Activated naive CD4-positive, alpha-beta T cell treated with anti-CD3 and anti-CD28 coated beads, Interleukin-2, amount 10 ng/mL, durations not matched to agents 7 days and 5 days (primary cell): ENCODE measurements at regions of chr16 and their contacts with region 1.

Region 1: DNA sequence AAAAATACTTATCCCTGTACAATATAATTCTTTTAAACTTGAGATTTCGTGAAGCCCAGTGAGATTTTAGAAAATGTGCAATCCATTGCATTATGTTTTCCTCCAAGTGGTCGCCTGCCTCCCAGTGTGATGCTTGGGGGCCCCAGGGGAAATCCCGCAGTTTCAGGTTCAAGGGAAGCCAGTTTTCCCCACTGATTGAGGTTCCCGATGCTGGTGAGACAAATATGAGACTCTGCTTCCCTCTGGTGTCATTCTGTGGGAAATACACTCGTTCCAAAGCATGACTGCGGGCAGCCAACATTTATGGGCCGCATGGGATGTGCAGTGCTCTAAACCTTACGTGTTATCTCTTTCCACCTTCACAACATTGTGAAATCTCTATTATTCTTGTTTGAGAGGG is 200.8 kb downstream of the PRKCB start:
- DNase-seq: peak; percentile 52
- H3K4me3 Mint-ChIP-seq: no peak overlapping the region
- H3K27ac Mint-ChIP-seq: no peak overlapping the region
- H3K4me1 Mint-ChIP-seq: peaks cover 52% of the 10 kb centered on the region
- H3K27me3 Mint-ChIP-seq: no peaks in the 10 kb centered on the region

Region 2: DNA sequence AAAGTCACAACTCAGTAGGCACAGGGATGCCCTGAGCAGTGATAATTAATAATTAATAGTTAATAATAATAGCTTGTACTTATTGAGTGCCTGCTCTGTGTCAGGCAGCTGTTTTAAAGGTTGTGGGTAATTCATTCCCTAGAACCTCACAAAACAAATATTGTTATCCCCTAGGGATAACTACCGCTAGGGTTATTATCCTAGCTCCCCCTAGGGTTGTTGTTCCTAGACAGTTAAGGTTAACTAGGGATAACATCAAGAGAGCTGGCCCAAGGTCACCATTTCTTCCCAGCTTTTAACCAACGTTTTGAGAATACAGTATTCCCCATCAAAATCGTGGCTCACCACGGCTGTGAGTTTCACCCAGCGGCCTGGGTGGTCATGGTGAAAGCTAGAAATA is 20.7 kb before region 1 on chr16:
- CTCF ChIA-PET with region 1: interaction called, 18 read pairs
- DNase-seq: no peak
- H3K4me3 Mint-ChIP-seq: no peak overlapping the region
- H3K27ac Mint-ChIP-seq: no peak overlapping the region
- H3K4me1 Mint-ChIP-seq: peaks cover 48% of the 10 kb centered on the region
- H3K27me3 Mint-ChIP-seq: no peaks in the 10 kb centered on the region

Region 3: GRCh38 chr16:24228514-24228913 is 191.9 kb after region 1 on chr16:
- CTCF ChIA-PET with region 1: no interaction called
- DNase-seq: no peak
- H3K4me3 Mint-ChIP-seq: no peak overlapping the region
- H3K27ac Mint-ChIP-seq: no peak overlapping the region
- H3K4me1 Mint-ChIP-seq: no peaks in the 10 kb centered on the region
- H3K27me3 Mint-ChIP-seq: peaks cover 4% of the 10 kb centered on the region